CD4-positive, alpha-beta memory T cell (primary cell): ENCODE measurements at regions of chr7 and their contacts with region 1.

Region 1: GRCh38 chr7:36366718-36367560 is 22.7 kb upstream of the ANLN start:
- DNase-seq: peak; percentile 90 to 93 (median 92)
- H3K4me3 ChIP-seq: peak overlapping the region; percentile 67 to 100
- H3K4me3 Mint-ChIP-seq: peak overlapping the region; percentile 92 to 95 (median 94)
- H3K27ac ChIP-seq: peak overlapping the region; percentile 73
- H3K27ac Mint-ChIP-seq: peak overlapping the region; percentile 77 to 96 (median 91)
- H3K4me1 ChIP-seq: peaks cover 11% of the 10 kb centered on the region
- H3K4me1 Mint-ChIP-seq: peaks cover 0 to 12% (median 5%) of the 10 kb centered on the region in 4 donors
- H3K27me3 ChIP-seq: peaks cover 6% of the 10 kb centered on the region
- H3K27me3 Mint-ChIP-seq: peaks cover 8 to 9% of the 10 kb centered on the region in 2 donors

Region 2: DNA sequence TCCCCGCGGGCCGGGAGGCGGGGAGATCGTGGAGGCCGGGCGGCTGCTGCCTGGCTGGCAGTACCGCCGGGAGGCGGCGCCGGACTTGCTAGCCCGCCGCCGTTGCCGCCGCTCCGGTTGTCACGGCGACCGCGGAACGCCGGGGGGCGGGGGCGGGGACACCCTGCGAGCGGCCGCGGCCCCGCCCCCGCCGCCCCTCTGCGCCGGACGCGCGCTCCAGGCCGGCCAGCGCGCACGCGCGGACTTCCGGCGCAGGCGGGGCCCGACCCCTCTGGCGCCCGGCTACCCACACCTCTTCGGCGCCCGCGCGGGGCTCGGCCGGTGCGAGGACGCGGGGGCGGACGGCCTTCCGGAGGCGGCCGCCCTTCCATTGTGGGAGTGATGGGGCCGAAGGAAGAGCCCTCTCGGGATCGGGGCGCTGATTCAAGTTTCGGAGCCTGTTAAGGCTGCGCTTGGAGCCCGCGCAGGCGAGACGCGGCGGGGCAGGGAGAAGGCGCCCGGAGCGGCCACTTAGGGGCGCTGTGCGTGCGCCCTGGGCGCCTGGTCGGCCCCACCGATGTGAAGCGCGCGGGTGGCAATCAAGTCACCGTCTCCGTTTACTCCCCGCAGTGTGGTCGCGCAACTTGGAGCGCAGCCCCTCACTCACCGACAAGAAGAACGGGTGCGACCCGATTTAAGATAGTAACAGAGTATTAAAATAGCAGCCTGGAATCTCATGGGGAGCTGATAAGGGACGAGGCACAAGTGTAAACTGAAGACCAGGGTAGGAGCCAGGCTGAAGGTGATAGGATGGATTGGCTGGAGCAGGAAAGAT is 1329.2 kb before region 1 on chr7:
- CTCF ChIA-PET with region 1: no interaction called
- POLR2A ChIA-PET with region 1: no interaction called
- intact Hi-C with region 1: loop called (anchors 5 kb)
- DNase-seq: peak; percentile 84 to 92 (median 88)
- H3K4me3 ChIP-seq: peak overlapping the region; percentile 17 to 58
- H3K4me3 Mint-ChIP-seq: peak overlapping the region; percentile 88 to 95 (median 90)
- H3K27ac ChIP-seq: peak overlapping the region; percentile 41
- H3K27ac Mint-ChIP-seq: peak overlapping the region; percentile 76 to 92 (median 87)
- H3K4me1 ChIP-seq: peaks cover 29% of the 10 kb centered on the region
- H3K4me1 Mint-ChIP-seq: peaks cover 22 to 39% (median 30%) of the 10 kb centered on the region in 4 donors
- H3K27me3 ChIP-seq: no peaks in the 10 kb centered on the region
- H3K27me3 Mint-ChIP-seq: no peaks in the 10 kb centered on the region

Region 3: DNA sequence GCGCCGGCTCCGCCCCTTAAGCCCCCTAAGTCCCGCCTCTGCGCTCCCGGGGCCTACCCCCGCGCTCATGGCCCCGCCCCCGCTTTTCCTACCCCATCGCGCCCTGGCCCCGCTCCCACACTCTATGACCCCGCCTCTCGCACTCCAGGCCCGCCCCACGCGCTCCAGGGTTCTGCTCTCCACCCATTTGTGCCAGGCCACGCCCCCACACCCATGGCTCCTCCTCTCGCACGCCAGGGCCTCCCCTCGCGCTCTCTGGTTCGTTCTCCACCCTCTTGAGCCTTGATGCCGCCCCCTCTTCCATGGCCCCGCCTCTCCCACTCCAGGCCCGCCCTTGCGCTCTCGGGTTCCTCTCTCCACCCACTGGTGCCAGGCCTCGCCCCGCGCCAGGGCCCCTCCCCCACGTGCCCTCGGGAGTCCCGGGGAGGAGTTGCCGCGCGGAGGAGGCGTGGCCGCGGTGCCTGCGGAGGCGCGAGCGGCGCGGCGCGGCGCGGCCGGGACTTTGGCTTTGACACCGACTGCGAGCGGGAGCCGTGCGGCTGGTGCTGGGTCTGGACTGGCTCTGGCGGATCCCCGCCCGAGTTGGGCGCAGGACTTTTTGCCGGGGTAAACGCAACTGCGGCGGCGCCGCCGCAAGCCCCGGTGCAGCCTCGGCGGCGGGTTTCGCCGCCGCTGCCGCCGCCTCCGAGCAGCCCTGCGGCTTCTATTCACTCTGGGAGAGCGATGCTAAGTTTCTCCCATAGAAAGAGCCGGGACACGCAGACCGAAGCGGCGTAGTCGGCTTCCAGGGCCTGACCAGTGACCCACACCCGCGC is 214.0 kb before region 1 on chr7 and contains the start of gene EEPD1:
- CTCF ChIA-PET with region 1: no interaction called
- POLR2A ChIA-PET with region 1: no interaction called
- intact Hi-C with region 1: loop called (anchors 10 kb)
- DNase-seq: peak; percentile 99 to 100 (median 100)
- H3K4me3 ChIP-seq: peak within 1 kb of the TSS; percentile 63 to 72
- H3K4me3 Mint-ChIP-seq: peak within 1 kb of the TSS; percentile 81 to 87 (median 84)
- H3K27ac ChIP-seq: peak within 1 kb of the TSS; percentile 53
- H3K27ac Mint-ChIP-seq: peak within 1 kb of the TSS; percentile 46 to 82 (median 73)
- H3K4me1 ChIP-seq: peaks cover 44% of the 10 kb centered on the region
- H3K4me1 Mint-ChIP-seq: peaks cover 17 to 48% (median 42%) of the 10 kb centered on the region in 4 donors
- H3K27me3 ChIP-seq: no peaks in the 10 kb centered on the region
- H3K27me3 Mint-ChIP-seq: no peaks in the 10 kb centered on the region
- total RNA-seq, gene EEPD1: 6.3 to 8.0 TPM

Region 4: DNA sequence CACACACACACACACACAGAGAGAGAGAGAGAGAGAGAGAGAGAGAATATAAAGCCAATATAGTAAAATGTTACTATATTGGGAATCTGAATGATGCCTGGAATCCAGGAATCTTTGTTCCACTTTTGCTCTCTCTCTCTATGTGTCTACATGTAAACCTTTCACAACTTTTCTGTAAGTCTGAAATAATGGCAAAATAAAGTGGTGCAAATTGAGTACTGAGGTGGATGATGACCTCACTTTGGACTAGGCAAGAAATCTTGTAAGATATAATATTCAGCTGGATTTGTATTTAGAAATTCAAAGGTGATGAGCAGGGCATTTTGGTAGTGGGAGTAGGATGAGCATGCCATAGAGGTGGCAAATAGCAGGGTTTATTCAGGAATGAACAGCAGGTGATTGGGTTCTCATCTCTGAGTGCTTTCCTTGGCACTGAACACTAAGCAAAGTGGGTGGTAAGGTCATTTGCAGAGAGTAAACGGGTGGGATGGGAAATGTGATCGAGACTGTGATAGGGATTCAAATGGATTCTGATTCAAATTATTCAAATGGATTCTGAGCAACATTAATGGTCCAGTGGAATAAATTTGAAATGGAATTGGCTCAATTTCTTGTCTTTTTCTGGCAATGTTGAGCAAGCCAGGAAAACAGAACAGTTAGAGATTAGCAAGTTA is 13.0 kb after region 1 on chr7:
- CTCF ChIA-PET with region 1: interaction called, 20 read pairs
- POLR2A ChIA-PET with region 1: interaction called, 16 read pairs
- intact Hi-C with region 1: no loop called
- DNase-seq: no peak
- H3K4me3 ChIP-seq: no peak overlapping the region
- H3K4me3 Mint-ChIP-seq: no peak overlapping the region
- H3K27ac ChIP-seq: no peak overlapping the region
- H3K27ac Mint-ChIP-seq: peak overlapping the region in 2 of 7 donors; percentile 6 to 40
- H3K4me1 ChIP-seq: peaks cover 13% of the 10 kb centered on the region
- H3K4me1 Mint-ChIP-seq: peaks cover 12 to 20% (median 16%) of the 10 kb centered on the region in 4 donors
- H3K27me3 ChIP-seq: no peaks in the 10 kb centered on the region
- H3K27me3 Mint-ChIP-seq: peaks cover 3 to 7% of the 10 kb centered on the region in 2 donors

Region 5: GRCh38 chr7:36440880-36441279 is 73.9 kb after region 1 on chr7:
- CTCF ChIA-PET with region 1: interaction called, 18 read pairs
- POLR2A ChIA-PET with region 1: no interaction called
- intact Hi-C with region 1: no loop called
- DNase-seq: peak in 4 of 5 donors; percentile 1 to 24 (median 6)
- H3K4me3 ChIP-seq: no peak overlapping the region
- H3K4me3 Mint-ChIP-seq: no peak overlapping the region
- H3K27ac ChIP-seq: no peak overlapping the region
- H3K27ac Mint-ChIP-seq: no peak overlapping the region
- H3K4me1 ChIP-seq: no peaks in the 10 kb centered on the region
- H3K4me1 Mint-ChIP-seq: no peaks in the 10 kb centered on the region
- H3K27me3 ChIP-seq: no peaks in the 10 kb centered on the region
- H3K27me3 Mint-ChIP-seq: no peaks in the 10 kb centered on the region